Activated CD8-positive, alpha-beta T cell treated with anti-CD3 and anti-CD28 coated beads, Interleukin-2, amount 10 ng/mL, durations not matched to agents 7 days and 5 days (primary cell): ENCODE measurements at regions of chr20 and their contacts with region 1.

Region 1: GRCh38 chr20:44747166-44748004 is 1.7 kb downstream of the KCNK15 start:
- DNase-seq: peak; percentile 73
- ATAC-seq: peak; percentile 45
- H3K4me3 Mint-ChIP-seq: no peak overlapping the region
- H3K27ac Mint-ChIP-seq: peak overlapping the region; percentile 44
- H3K4me1 Mint-ChIP-seq: peaks cover 6% of the 10 kb centered on the region
- H3K27me3 Mint-ChIP-seq: peaks cover 25% of the 10 kb centered on the region

Region 2: DNA sequence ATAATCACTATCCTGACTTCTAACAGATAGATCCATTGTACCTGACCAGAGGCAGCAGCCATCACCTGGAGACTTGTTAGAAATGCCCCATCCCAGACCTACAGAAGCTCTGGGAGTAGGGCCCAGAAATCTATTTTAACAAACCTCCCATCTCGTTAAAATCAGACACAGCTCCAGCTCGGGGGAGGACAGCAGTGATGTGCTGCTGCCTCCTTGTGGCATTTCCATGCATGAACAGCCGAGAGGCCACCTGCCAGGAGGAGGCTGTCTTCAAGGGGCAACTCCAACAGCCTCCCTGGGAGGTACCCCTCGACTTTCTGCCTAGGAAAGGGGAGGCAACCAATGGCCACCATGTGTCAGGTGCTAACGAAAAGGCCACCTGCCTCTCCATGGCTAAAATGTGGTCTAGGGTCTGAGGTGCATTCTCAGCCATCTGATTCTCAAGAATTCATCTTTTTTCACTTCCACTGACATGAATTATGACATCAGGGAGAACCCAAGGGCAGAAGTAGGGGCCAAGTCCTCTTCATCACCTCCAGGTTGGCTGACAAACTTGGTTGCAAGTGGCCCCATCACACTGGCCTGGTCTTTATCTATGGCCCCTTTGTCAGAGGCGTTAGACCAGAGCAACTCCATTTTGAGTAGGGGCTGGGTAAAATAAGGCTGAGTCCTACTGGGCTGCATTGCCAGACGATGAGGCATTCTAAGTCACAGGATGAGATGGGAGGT is 13.9 kb before region 1 on chr20:
- CTCF ChIA-PET with region 1: interaction called, 10 read pairs
- POLR2A ChIA-PET with region 1: no interaction called
- DNase-seq: peak; percentile 75
- ATAC-seq: peak; percentile 83
- H3K4me3 Mint-ChIP-seq: no peak overlapping the region
- H3K27ac Mint-ChIP-seq: no peak overlapping the region
- H3K4me1 Mint-ChIP-seq: peaks cover 18% of the 10 kb centered on the region
- H3K27me3 Mint-ChIP-seq: no peaks in the 10 kb centered on the region

Region 3: GRCh38 chr20:44866703-44867335 is 119.4 kb after region 1 on chr20:
- CTCF ChIA-PET with region 1: interaction called, 24 read pairs
- POLR2A ChIA-PET with region 1: no interaction called
- DNase-seq: no peak
- ATAC-seq: no peak
- H3K4me3 Mint-ChIP-seq: peak overlapping the region; percentile 34
- H3K27ac Mint-ChIP-seq: no peak overlapping the region
- H3K4me1 Mint-ChIP-seq: peaks cover 8% of the 10 kb centered on the region
- H3K27me3 Mint-ChIP-seq: peaks cover 14% of the 10 kb centered on the region